Calu3 (cell line): ENCODE measurements at regions of chr3 and their contacts with region 1.

Region 1: DNA sequence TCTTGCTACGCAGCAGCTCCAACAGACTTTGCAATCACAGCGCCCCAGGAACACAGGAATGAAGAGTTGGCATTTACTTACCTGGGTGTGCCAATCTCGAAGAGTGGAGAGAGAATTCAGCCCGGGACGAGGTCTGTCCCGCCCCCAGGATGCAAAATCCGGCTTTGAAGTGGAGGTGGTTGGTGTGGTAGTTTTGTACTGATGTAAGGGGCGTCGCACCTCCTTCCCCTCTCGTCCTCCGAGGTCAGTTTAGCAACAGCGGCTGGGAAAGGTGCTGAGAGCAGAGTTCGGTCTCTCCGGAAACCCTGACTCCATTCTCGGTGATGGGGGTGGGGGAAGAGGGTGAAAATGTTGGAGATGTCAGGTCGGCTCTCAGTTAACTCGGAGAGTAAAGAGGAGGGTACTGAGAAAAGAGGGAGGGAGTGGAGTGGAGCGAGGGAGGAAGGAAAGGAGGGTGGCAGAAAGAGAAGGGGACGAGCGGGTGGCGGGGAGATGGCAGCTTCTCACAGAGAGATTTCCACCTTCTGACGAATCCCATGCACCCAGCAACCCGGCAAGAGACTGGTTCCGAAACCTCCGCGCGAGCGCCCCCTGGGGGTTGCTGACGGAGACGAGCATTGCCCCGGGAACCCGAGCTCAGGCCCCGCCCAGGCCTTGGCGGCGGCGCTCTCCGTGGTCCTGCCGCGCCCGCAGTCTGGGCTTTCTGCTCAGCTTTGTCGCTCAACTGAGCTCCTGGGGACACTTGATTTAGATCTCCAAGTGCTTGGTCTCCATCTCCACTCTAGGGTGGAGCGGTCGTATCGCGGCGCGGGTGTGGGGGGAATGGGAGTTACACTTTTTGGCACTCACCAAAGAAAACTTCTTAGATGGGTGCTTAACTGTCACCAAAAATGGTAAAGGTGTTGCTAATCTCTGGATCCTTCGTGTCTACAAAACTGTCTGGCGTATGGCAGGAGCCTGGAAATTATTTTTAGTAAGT is at the start of gene CPNE4:
- DNase-seq: peak; percentile 100
- H3K4me3 Mint-ChIP-seq: peak within 1 kb of the TSS; percentile 93
- H3K27ac Mint-ChIP-seq: peak within 1 kb of the TSS; percentile 75
- H3K4me1 Mint-ChIP-seq: peaks cover 34% of the 10 kb centered on the region
- H3K27me3 Mint-ChIP-seq: no peaks in the 10 kb centered on the region
- CTCF ChIP-seq: peak; percentile 98
- total RNA-seq, gene CPNE4: 23.2 and 31.1 TPM in 2 replicates

Region 2: GRCh38 chr3:131794766-131795388 is 239.9 kb before region 1 on chr3:
- CTCF ChIA-PET with region 1: interaction called, 40 read pairs
- intact Hi-C with region 1: loop called (anchors 1 kb)
- DNase-seq: peak; percentile 77
- H3K4me3 Mint-ChIP-seq: no peak overlapping the region
- H3K27ac Mint-ChIP-seq: no peak overlapping the region
- H3K4me1 Mint-ChIP-seq: peaks cover 22% of the 10 kb centered on the region
- H3K27me3 Mint-ChIP-seq: no peaks in the 10 kb centered on the region
- CTCF ChIP-seq: peak; percentile 96

Region 3: GRCh38 chr3:131981323-131981722 is 53.5 kb before region 1 on chr3:
- CTCF ChIA-PET with region 1: no interaction called
- intact Hi-C with region 1: no loop called
- DNase-seq: no peak
- H3K4me3 Mint-ChIP-seq: no peak overlapping the region
- H3K27ac Mint-ChIP-seq: no peak overlapping the region
- H3K4me1 Mint-ChIP-seq: peaks cover 6% of the 10 kb centered on the region
- H3K27me3 Mint-ChIP-seq: no peaks in the 10 kb centered on the region
- CTCF ChIP-seq: no peak

Region 4: DNA sequence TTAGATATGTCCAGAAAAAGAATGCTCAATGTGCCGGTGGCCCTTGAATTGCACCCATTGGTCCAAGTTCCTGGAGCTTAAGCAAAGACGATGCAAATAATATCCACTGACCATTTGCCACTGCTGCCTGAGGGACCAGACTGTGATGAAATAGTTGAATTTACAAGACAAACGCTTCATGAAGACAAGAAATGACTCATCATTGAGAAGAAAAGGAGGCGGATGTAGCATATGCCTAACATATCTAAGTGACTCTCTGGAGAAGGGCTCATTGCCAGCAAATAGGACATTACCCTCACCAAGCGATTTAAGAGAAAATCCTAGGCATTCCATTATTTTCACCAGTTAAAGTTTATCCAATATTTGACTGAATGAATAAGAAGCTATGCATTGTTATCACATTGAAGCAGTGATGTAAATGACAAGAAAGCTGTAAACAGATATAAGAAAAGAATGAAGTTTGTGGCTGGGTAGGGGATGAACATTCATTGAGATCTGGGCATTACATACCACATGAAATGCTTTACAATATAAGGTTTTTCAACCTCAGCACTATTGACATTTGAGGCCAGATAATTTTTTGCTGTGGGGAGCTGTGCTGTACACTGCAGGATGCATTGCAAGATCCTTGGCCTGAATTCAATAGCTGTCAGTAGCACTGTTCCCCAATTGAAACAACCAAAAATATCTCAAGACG is 49.0 kb after region 1 on chr3:
- CTCF ChIA-PET with region 1: interaction called, 4 read pairs
- intact Hi-C with region 1: loop called (anchors 2 kb)
- DNase-seq: peak; percentile 54
- H3K4me3 Mint-ChIP-seq: peak overlapping the region; percentile 31
- H3K27ac Mint-ChIP-seq: peak overlapping the region; percentile 0
- H3K4me1 Mint-ChIP-seq: peaks cover 49% of the 10 kb centered on the region
- H3K27me3 Mint-ChIP-seq: no peaks in the 10 kb centered on the region
- CTCF ChIP-seq: no peak

Region 5: GRCh38 chr3:132180337-132180791 is 145.6 kb after region 1 on chr3:
- CTCF ChIA-PET with region 1: interaction called, 31 read pairs
- intact Hi-C with region 1: loop called (anchors 1 kb)
- DNase-seq: peak; percentile 74
- H3K4me3 Mint-ChIP-seq: no peak overlapping the region
- H3K27ac Mint-ChIP-seq: peak overlapping the region; percentile 85
- H3K4me1 Mint-ChIP-seq: peaks cover 23% of the 10 kb centered on the region
- H3K27me3 Mint-ChIP-seq: no peaks in the 10 kb centered on the region
- CTCF ChIP-seq: peak; percentile 89

Region 6: GRCh38 chr3:132210476-132211346 is 175.9 kb after region 1 on chr3:
- CTCF ChIA-PET with region 1: interaction called, 26 read pairs
- intact Hi-C with region 1: loop called (anchors 1 kb)
- DNase-seq: peak; percentile 84
- H3K4me3 Mint-ChIP-seq: no peak overlapping the region
- H3K27ac Mint-ChIP-seq: no peak overlapping the region
- H3K4me1 Mint-ChIP-seq: peaks cover 12% of the 10 kb centered on the region
- H3K27me3 Mint-ChIP-seq: no peaks in the 10 kb centered on the region
- CTCF ChIP-seq: peak; percentile 98

Region 7: DNA sequence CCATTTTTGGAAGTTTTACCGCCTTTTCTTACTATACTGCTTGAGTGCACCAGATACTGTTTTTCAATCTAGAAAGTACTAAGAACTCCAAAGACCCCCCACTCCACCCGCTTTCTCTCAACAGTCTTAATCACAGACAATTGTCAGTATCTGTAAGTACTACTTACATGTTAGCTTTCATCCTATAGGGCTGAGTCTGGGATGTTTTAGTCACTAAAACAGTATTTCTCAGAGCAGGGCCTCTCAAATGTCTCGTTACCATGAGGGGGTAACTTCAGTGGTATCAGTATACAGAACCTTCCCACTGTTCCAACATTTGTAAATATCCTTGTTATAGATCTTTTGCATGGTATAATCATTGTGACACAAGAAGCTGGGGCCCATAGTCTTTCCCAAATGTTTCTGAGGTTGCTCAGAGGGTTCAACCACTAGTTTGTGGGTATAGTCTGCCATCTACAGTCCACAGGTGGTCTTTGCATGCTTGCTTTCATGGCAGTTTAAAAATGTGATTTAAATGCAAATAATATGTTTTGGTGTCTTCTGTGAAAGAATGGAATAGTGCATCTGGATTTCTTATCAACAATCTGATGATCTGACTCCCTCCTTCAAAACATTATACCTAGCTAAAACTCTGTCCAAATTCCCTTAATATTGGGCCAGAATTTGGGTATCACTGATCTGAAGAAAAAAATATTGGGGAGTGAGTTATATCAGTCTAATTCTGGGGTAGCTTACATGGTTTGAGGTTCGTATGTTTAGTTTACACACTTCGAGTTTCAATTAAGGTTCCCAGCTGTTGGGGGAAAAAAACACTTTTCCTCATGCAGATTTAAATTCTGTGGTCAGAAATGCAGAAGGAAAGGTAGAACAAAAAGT is 364.5 kb after region 1 on chr3:
- CTCF ChIA-PET with region 1: interaction called, 3 read pairs
- intact Hi-C with region 1: loop called (anchors 5 kb)
- DNase-seq: peak; percentile 63
- H3K4me3 Mint-ChIP-seq: no peak overlapping the region
- H3K27ac Mint-ChIP-seq: no peak overlapping the region
- H3K4me1 Mint-ChIP-seq: no peaks in the 10 kb centered on the region
- H3K27me3 Mint-ChIP-seq: no peaks in the 10 kb centered on the region
- CTCF ChIP-seq: peak; percentile 87